Psoas muscle (tissue), 8 donors: ENCODE measurements at regions of chr16 and their contacts with region 1.

Region 1: DNA sequence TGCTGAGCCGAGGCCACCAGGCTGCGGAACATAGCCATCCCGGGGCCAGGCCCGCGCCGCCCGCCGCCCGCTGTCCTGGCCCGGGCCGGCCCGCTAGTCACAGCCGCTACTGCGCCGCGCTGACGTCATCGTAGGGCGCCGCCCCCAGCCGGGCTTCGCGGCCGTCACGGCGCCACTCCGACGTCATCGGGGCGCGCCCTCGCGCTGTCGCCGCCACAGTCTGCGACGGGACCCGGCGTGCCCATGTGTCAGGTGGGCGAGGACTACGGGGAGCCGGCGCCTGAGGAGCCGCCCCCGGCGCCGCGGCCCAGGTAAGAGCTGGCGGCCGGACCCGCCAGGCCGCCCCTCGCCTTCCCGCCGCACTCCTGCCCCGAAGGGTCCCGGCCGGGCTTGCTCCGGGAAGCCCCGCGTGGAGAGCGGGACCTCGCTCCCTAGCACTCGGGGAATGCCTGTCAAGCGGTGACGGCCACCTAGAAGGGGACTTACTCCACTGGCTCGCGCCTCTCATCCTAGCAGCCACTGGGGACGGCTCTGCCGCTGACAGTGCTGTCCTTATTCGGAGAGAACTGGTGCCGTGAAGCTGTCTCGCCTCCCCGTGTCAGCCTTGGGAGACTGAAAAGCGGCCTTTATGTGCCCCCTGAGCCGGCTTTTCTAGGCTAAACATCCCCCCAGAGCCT is at the starts of genes CTU2 and RNF166:
- DNase-seq: peak; percentile 94 to 97
- ATAC-seq: peak; percentile 93 to 96 (median 94)
- H3K4me3 ChIP-seq: peak within 1 kb of the TSS; percentile 88
- H3K27ac ChIP-seq: peak within 1 kb of the TSS; percentile 91
- H3K4me1 ChIP-seq: peaks cover 18% of the 10 kb centered on the region
- H3K27me3 ChIP-seq: no peaks in the 10 kb centered on the region
- CTCF ChIP-seq: no peak
- total RNA-seq, gene CTU2: 12.4 to 24.1 (median 19.6) TPM
- total RNA-seq, gene RNF166: 13.4 to 22.9 (median 15.7) TPM

Region 2: GRCh38 chr16:88569985-88570690 is 136.3 kb before region 1 on chr16 and contains the start of gene ZC3H18:
- intact Hi-C with region 1: loop called (anchors 5 kb)
- DNase-seq: peak; percentile 98 to 99
- ATAC-seq: peak; percentile 99 to 100 (median 99)
- H3K4me3 ChIP-seq: peak within 1 kb of the TSS; percentile 72
- H3K27ac ChIP-seq: peak within 1 kb of the TSS; percentile 85
- H3K4me1 ChIP-seq: peaks cover 17% of the 10 kb centered on the region
- H3K27me3 ChIP-seq: no peaks in the 10 kb centered on the region
- CTCF ChIP-seq: no peak
- total RNA-seq, gene ZC3H18: 24.8 to 30.5 (median 26.9) TPM

Region 3: DNA sequence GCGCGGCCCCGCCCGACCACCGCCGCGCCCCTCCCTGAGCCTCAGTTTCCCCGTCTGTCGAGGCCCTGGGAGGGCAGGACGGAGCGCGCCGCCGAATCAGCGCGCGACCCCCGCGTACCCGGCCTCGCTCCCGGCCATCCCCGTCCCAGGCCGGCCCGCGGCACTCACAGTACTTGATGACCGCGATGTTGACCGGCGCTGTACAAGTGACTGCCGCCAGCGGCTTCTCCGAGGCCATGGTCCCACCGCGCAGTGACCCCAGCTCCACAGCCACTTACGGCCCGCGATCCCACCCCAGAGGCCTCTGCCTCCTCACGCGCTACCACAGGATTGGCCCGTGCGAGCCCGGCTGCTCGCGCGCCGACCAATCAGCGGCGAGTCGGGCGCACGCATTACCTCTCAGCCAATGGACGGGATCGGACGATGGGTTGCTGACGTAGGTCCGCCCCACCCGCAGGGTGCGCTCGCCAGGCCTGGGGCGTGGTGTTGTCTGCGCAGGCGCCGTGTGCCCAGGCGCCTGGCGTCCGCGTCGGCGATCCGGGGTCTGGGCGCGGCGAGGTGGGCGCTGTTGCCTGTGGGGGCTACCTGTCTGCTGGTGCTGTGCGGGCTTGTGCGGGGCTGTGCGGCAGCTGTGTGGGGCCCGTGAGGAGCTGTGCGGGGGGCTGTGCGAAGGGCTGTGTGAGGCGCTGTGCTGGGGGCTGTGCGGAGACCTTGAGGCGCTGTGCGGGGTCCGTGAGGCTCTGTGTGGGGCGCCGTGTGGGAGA is 43.4 kb before region 1 on chr16 and contains the start of gene MVD:
- intact Hi-C with region 1: loop called in 1 of 2 experiments (anchors 5 kb)
- DNase-seq: peak; percentile 97 to 99
- ATAC-seq: peak; percentile 98 to 99 (median 98)
- H3K4me3 ChIP-seq: peak within 1 kb of the TSS; percentile 100
- H3K27ac ChIP-seq: peak within 1 kb of the TSS; percentile 92
- H3K4me1 ChIP-seq: peaks cover 17% of the 10 kb centered on the region
- H3K27me3 ChIP-seq: no peaks in the 10 kb centered on the region
- CTCF ChIP-seq: no peak
- total RNA-seq, gene MVD: 11.7 to 26.8 (median 16.1) TPM